Dorsolateral prefrontal cortex (tissue), 120 donors: ENCODE measurements at regions of chr10 and their contacts with region 1.

Region 1: DNA sequence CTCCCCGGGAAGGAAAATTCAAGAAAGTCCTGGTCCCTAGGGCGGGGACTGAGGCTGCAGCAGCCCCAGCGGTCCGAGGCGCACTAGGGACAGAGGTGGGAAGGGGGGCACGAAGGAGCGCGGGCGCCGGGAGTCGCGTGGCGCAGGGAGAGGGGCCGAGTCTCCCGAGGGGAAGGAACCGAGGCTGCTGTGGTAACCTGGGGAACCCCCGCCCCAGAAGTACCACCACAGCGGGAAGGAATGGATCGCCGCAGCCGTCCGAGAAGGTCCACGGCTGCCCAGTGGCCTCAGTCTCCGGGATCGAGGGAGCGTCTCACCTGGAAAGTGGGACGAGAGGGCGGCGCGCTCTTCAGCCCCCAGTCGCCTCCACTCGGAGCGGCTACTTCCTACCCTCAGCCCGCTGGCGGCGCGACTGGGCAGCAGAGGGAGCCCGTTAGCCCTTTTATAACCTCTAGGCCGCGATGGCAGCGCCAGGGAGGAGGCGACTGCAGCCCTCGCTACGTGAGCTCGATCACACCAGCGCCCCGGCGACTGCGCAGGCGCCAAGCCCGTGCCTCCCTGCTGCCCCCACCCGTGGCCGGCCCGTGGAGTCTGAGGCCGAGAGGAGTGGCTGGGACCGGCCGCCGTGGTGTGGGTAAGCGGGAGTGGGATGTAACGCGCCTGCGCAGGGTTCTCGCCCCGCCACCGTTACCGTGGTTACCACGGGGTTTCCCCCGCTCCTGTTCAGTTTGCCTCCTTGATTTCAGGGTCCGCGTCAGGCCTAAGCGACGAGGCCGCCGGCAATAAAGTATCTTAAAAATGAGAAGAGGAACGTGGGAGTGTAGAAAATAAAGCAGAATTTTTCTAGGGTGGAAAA is at the start of gene P4HA1:
- DNase-seq: peak; percentile 97 to 99 (median 99)
- H3K4me3 ChIP-seq: peak within 1 kb of the TSS; percentile 60 to 98 (median 88)
- H3K27ac ChIP-seq: peak within 1 kb of the TSS; percentile 86 to 100 (median 99)
- H3K27me3 ChIP-seq: no peaks in the 10 kb centered on the region
- CTCF ChIP-seq: peak in 55 of 56 donors; percentile 15 to 95 (median 78)
- total RNA-seq, gene P4HA1: 12.9 to 95.8 (median 22.2) TPM

Region 2: GRCh38 chr10:72426986-72427385 is 669.7 kb before region 1 on chr10:
- intact Hi-C with region 1: loop called in 1 of 2 experiments (anchors 5 kb)
- DNase-seq: peak in 2 of 10 donors; percentile 10 to 84
- H3K4me3 ChIP-seq: no peak overlapping the region
- H3K27ac ChIP-seq: peak overlapping the region in 51 of 59 donors; percentile 0 to 94 (median 65)
- H3K27me3 ChIP-seq: no peaks in the 10 kb centered on the region
- CTCF ChIP-seq: no peak

Region 3: DNA sequence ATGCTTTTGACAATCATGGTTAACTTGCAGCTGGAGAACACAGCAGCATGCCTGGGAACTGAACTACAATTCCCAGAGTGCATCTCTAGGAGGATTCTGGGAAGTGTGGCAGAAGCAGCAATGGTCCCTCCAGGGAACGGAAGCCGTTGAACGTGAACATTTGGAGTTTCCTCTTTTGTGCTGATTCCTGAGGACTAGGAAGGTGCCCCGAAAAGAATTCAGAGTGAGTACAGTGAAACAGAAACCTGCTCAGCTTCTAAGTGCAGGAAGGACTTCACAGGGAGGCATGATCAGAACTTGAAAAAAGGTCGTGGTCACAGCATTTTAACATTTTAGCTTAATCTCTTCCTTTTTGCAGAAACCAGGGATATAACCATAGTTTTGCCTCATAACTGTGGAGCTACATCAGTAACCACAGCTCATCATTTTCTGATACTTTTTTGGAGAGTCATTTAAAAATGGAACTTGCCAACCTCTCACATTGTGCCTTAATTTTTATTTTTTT is 13.7 kb after region 1 on chr10 and contains the start of gene NUDT13:
- intact Hi-C with region 1: loop called in 1 of 2 experiments (anchors 2 kb)
- DNase-seq: peak in 9 of 10 donors; percentile 59 to 88 (median 70)
- H3K4me3 ChIP-seq: peak within 1 kb of the TSS; percentile 34 to 79 (median 62)
- H3K27ac ChIP-seq: peak within 1 kb of the TSS; percentile 6 to 95 (median 84)
- H3K27me3 ChIP-seq: no peaks in the 10 kb centered on the region
- CTCF ChIP-seq: peak in 19 of 56 donors; percentile 7 to 44 (median 25)
- total RNA-seq, gene NUDT13: 0.25 to 4.0 (median 1.3) TPM

Region 4: DNA sequence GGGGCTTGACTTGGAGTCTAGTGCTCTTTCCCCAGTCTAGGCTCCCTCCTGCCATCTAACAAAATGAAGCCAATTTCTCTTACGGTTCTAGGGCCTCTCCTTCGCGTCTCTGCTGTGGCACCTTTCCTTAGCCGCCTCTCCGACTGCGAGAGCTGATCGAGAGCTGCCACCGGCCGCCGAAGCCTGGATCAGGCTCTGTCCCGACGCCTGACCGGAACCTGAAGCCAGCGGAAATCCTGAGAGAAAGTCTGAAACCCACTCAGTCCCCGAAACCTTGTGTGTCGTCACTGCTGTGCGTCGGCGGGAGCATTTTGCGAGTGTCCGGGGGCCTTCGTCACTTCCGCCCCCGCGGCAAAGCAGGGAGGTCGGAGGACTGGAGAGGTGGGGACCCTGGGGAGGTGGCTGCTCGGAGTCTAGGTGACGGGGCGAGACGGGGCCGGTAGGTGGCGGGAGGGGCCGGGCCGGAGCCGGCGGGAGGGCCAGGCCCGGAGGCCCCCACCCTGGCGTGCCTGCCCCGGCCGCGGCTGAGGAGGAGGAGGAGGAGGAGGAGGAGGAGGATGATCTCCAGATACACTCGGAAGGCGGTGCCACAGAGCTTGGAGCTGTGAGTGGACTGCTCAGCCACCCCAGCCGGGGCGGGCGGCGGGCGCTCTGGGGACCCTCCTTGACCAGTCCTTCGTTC is 71.2 kb after region 1 on chr10 and contains the starts of genes ECD and FAM149B1:
- intact Hi-C with region 1: loop called (anchors 2 to 5 kb)
- DNase-seq: peak; percentile 88 to 96 (median 93)
- H3K4me3 ChIP-seq: peak within 1 kb of the TSS; percentile 67 to 100 (median 94)
- H3K27ac ChIP-seq: peak within 1 kb of the TSS; percentile 75 to 98 (median 94)
- H3K27me3 ChIP-seq: no peaks in the 10 kb centered on the region
- CTCF ChIP-seq: peak in 44 of 56 donors; percentile 4 to 56 (median 34)
- total RNA-seq, gene ECD: 25.0 to 44.1 (median 33.4) TPM
- total RNA-seq, gene FAM149B1: 21.7 to 41.9 (median 29.3) TPM

Region 5: DNA sequence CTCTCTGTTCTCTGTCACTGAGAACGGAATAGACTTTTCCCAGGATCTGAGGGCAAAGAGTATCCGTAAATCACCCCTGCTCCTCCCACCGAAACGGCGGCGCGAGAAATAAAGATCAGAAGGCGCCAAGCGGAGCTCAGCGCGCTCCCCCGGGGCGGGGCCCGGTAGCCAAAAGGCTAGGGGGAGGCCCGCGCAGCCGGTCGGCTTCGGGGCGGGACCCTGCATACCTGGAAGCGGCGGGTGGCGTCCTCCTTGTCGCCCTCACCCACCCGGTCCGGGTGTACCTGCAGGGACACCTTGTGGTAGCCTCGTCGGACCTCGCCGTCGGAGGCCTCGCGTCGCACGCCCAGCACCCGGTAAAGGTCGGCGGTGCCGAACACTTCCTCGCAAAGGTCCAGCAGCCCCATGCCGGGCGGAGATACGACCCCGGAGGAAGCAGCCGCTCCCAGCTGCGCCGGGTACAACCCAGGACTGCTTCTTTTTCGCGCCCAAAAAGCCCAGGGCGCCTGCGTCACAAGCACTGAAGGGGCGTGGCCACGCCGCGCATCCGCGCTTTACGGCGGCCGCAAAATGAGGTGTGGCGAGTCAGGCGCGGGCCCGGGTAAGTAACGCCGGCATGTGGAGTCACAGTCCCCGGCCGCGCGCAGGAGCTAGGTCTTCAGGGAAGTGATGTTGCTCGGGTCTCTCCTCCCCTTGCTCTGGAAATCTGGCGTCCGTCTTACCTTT is 150.3 kb after region 1 on chr10 and contains the start of gene DNAJC9:
- intact Hi-C with region 1: loop called (anchors 5 kb)
- DNase-seq: peak; percentile 93 to 97 (median 96)
- H3K4me3 ChIP-seq: peak within 1 kb of the TSS; percentile 72 to 100 (median 94)
- H3K27ac ChIP-seq: peak within 1 kb of the TSS in 55 of 59 donors; percentile 1 to 89 (median 65)
- H3K27me3 ChIP-seq: no peaks in the 10 kb centered on the region
- CTCF ChIP-seq: peak in 34 of 56 donors; percentile 11 to 57 (median 30)
- total RNA-seq, gene DNAJC9: 17.3 to 49.8 (median 28.6) TPM

Region 6: DNA sequence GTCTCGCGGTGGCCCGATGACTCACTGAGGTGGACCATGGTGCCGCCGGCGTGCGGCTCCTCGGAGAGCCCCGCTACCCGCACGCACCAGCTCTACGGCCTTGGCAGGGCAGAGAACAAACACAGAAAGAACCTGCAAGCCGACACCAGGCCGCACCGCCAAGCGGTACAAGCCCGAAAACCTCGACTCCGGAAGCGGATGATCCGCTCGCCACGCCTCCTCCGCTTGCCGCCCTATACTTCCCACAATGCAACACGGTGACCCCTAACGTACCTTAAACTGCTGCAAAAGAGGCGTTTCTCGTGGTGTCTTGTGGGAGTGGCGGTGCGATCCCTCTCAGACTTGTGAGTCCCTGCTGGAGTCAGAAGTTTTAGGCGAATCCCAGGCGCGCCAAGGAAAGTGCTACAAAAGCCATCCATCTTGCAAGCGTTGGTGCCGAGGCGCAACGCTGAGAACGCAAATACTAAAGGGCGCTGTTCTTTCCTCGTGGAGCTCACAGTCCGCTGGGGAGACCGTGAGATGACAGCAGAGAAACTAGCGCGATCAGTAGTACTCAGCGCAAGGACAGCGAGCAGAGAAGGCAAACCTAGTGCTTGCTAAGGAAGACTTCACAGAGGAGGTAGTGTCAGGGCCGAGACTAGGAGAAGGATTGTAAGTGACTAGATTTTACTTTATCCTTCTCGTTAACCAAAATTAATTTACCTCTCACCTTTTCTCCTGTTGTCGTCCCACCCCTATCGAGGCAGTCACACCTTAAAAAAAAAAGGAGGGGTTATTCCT is 156.0 kb after region 1 on chr10 and contains the start of gene MRPS16:
- intact Hi-C with region 1: loop called (anchors 5 kb)
- DNase-seq: peak; percentile 83 to 98 (median 94)
- H3K4me3 ChIP-seq: peak within 1 kb of the TSS; percentile 62 to 98 (median 91)
- H3K27ac ChIP-seq: peak within 1 kb of the TSS; percentile 35 to 97 (median 91)
- H3K27me3 ChIP-seq: no peaks in the 10 kb centered on the region
- CTCF ChIP-seq: peak in 45 of 56 donors; percentile 13 to 60 (median 34)
- total RNA-seq, gene MRPS16: 44.5 to 85.9 (median 58.6) TPM